Astrocyte of the cerebellum (primary cell): ENCODE measurements at regions of chr7 and their contacts with region 1.

Region 1: DNA sequence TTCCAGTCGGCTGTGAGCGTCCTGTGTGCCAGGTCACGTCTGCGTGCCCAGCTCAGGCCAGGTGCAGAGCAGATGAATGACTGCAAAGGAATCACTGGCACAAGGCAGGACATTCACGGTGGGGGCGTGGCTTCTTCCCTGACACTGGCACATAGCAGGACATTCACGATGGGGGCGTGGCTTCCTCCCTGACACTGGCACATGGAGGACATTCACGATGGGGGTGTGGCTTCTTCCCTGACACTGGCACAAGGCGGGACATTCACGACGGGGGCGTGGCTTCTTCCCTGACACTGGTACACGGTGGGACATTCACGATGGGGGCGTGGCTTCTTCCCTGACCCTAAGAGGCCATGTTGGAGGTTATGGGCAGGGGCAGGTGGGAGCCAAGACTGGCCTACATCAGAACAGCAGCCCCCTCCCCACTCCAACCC is 64.3 kb downstream of the MYL10 start:
- DNase-seq: no peak
- H3K4me3 ChIP-seq: no peak overlapping the region
- CTCF ChIP-seq: no peak

Region 2: DNA sequence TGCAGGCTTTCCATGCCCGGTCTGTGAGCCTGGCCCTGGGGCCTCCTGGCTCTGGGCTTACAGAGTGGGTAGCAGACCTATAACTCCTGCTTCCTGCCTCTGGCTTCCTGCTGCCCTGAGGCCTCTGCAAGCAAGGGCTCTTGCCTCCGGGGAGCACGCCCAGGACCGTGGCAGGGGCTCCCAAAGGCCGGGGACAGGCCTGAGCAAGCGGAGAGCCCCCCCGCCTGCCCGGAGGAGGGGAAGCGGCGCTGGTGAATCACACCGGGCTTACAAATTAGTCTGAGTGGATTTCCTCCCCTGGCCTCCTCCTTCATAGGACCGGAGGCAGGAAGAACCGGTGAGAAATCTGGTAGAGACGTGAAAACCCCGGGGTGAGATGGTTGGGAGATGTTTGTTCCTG is 65.8 kb after region 1 on chr7:
- in situ Hi-C with region 1: loop called (anchors 5 kb)
- DNase-seq: no peak
- H3K4me3 ChIP-seq: no peak overlapping the region
- CTCF ChIP-seq: no peak

Region 3: GRCh38 chr7:101669307-101669706 is 104.5 kb after region 1 on chr7:
- in situ Hi-C with region 1: no loop called
- DNase-seq: no peak
- H3K4me3 ChIP-seq: no peak overlapping the region
- CTCF ChIP-seq: peak; percentile 23